Breast epithelium (tissue), 4 donors: ENCODE measurements at regions of chr12 and their contacts with region 1.

Region 1: GRCh38 chr12:88684602-88685001 is 104.3 kb upstream of the KITLG start:
- DNase-seq: no peak
- H3K4me3 ChIP-seq: no peak overlapping the region
- H3K27ac ChIP-seq: no peak overlapping the region
- H3K4me1 ChIP-seq: no peaks in the 10 kb centered on the region
- H3K27me3 ChIP-seq: no peaks in the 10 kb centered on the region
- CTCF ChIP-seq: no peak
- POLR2A ChIP-seq: no peak

Region 2: DNA sequence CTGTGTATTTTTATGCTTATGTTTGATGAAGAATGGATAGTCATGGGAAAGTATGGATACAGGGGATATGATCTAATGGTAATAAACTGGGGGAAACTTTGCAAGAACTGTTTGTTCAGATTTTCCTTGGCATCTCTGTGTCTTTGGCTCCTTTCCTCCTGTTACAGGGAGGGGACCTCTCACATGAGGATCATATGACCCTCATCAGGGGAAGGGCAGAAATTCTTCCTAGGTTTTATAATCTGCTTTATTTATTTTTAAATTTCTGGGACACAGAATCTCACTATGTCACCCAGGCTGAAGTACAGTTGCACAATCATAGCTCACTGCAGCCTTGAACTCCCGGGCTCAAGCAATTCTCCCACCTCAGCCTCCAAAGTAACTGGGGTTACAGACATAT is 1743.9 kb after region 1 on chr12:
- intact Hi-C with region 1: loop called (anchors 10 kb)
- DNase-seq: no peak
- H3K4me3 ChIP-seq: no peak overlapping the region
- H3K27ac ChIP-seq: no peak overlapping the region
- H3K4me1 ChIP-seq: no peaks in the 10 kb centered on the region
- H3K27me3 ChIP-seq: no peaks in the 10 kb centered on the region
- CTCF ChIP-seq: no peak
- POLR2A ChIP-seq: no peak